Activated naive CD4-positive, alpha-beta T cell treated with anti-CD3 and anti-CD28 coated beads for 36 hours (primary cell): ENCODE measurements at regions of chr14 and their contacts with region 1.

Region 1: GRCh38 chr14:22556990-22557623 is 31.9 kb downstream of the DAD1 start:
- DNase-seq: peak; percentile 95
- H3K4me3 Mint-ChIP-seq: peak overlapping the region; percentile 74
- H3K27ac Mint-ChIP-seq: peak overlapping the region; percentile 97
- H3K4me1 Mint-ChIP-seq: peaks cover 84% of the 10 kb centered on the region
- H3K27me3 Mint-ChIP-seq: no peaks in the 10 kb centered on the region

Region 2: DNA sequence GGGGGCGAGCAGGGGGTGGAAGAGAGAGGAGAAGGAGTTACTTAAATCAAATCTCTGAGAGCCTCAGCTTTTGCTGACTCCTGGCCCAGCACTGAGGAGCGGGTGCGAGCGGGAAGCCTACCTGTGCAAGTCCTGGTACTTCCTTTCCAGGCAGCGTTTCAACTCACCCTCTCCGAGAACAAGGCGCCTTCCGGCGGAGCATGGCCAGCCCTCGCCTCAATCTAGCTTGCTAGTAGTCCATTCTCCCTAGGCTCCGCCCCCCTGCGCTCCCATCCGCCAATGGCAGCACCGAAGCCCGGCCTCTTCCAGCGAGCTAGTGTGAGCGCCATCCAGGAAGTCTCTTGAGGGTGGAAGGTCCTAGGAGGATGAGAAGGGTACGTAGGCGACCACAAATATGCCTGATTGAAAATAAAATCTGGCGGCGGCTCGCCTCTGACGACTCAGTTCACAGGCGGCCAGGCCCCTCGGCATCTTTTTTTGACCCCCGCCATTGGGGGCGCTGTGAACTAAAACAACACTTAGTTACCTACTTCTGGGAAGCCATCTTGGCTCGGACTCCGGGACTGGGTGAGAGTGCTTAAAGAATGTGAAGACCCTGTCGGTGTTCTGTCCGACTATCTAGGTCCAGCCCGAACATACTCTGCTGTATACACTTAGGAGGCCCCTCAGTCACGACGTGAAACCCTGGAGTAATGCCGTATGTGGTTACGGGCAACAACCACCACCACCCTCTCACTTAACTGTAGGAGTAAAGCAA is 1101.0 kb before region 1 on chr14 and contains the start of gene CHD8:
- CTCF ChIA-PET with region 1: no interaction called
- intact Hi-C with region 1: loop called (anchors 10 kb)
- DNase-seq: peak; percentile 100
- H3K4me3 Mint-ChIP-seq: peak within 1 kb of the TSS; percentile 91
- H3K27ac Mint-ChIP-seq: peak within 1 kb of the TSS; percentile 98
- H3K4me1 Mint-ChIP-seq: peaks cover 37% of the 10 kb centered on the region
- H3K27me3 Mint-ChIP-seq: no peaks in the 10 kb centered on the region
- total RNA-seq, gene CHD8: 73.9 to 75.5 TPM

Region 3: GRCh38 chr14:21917699-21918436 is 639.2 kb before region 1 on chr14:
- CTCF ChIA-PET with region 1: interaction called, 31 read pairs
- intact Hi-C with region 1: loop called (anchors 1 kb)
- DNase-seq: peak; percentile 82
- H3K4me3 Mint-ChIP-seq: peak overlapping the region; percentile 69
- H3K27ac Mint-ChIP-seq: peak overlapping the region; percentile 89
- H3K4me1 Mint-ChIP-seq: peaks cover 58% of the 10 kb centered on the region
- H3K27me3 Mint-ChIP-seq: no peaks in the 10 kb centered on the region

Region 4: DNA sequence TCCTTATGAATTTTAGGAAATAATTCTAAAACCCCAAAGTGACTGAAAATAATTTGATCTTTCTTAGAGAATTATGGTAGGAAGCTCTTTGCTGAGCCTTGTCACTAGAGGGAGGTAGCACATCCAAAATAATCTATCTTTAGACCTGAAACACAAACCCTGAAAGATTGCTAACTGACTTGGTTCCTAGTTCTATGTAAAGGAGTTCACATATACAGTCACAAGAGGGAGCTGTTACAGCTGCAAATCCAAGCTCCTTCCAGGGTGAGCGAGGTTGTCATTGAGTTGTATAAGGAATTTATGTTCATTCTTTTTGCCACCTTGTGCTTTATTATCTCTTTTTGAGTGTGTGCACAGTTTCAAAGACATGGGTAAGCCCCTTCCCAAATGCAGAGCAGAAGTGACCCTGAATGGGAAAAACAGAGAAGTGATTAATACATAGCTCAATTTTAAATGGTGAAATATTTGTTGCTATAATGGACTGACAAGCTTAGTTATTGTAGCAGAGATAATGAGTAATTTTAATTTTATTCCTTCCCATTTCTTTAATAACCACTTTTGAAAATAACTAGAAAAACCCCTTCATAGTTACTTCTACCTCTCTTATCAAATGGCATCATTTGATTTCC is 356.0 kb before region 1 on chr14:
- CTCF ChIA-PET with region 1: interaction called, 5 read pairs
- intact Hi-C with region 1: loop called (anchors 5 kb)
- DNase-seq: no peak
- H3K4me3 Mint-ChIP-seq: no peak overlapping the region
- H3K27ac Mint-ChIP-seq: no peak overlapping the region
- H3K4me1 Mint-ChIP-seq: peaks cover 3% of the 10 kb centered on the region
- H3K27me3 Mint-ChIP-seq: no peaks in the 10 kb centered on the region

Region 5: DNA sequence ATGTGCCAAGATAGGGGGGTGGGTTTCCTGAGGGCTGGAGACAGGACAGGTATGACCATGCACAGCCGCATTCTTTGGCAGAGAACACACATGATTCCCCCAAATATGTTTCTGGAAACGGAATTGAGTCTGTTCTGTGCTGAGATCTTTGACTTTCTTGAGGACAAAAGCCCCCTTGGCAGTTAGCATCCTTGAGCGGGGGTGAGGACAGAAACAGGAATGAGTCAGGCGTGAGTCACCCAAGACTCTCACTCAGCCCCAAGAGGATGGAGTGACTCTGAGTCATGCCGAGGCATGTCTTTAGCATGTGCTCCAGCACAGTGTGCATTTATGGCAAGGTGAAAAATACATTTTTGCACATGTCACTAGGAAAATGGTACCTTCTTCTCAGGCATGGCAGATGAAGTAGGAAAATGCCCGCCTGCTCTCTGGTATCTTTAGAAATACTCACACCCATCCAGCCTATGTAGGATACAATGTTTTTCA is 20.2 kb before region 1 on chr14:
- CTCF ChIA-PET with region 1: interaction called, 67 read pairs
- intact Hi-C with region 1: loop called (anchors 1 kb)
- DNase-seq: peak; percentile 95
- H3K4me3 Mint-ChIP-seq: peak overlapping the region; percentile 67
- H3K27ac Mint-ChIP-seq: peak overlapping the region; percentile 98
- H3K4me1 Mint-ChIP-seq: peaks cover 93% of the 10 kb centered on the region
- H3K27me3 Mint-ChIP-seq: no peaks in the 10 kb centered on the region

Region 6: GRCh38 chr14:22653012-22653621 is 96.0 kb after region 1 on chr14:
- CTCF ChIA-PET with region 1: interaction called, 20 read pairs
- intact Hi-C with region 1: loop called (anchors 1 kb)
- DNase-seq: peak; percentile 78
- H3K4me3 Mint-ChIP-seq: no peak overlapping the region
- H3K27ac Mint-ChIP-seq: no peak overlapping the region
- H3K4me1 Mint-ChIP-seq: no peaks in the 10 kb centered on the region
- H3K27me3 Mint-ChIP-seq: no peaks in the 10 kb centered on the region

Region 7: GRCh38 chr14:22872033-22872832 is 315.1 kb after region 1 on chr14:
- CTCF ChIA-PET with region 1: no interaction called
- intact Hi-C with region 1: loop called (anchors 1 kb)
- DNase-seq: peak; percentile 87
- H3K4me3 Mint-ChIP-seq: peak overlapping the region; percentile 91
- H3K27ac Mint-ChIP-seq: peak overlapping the region; percentile 100
- H3K4me1 Mint-ChIP-seq: peaks cover 29% of the 10 kb centered on the region
- H3K27me3 Mint-ChIP-seq: no peaks in the 10 kb centered on the region